ENCODE measurements at regions of chr1 and their contacts with region 1.

Region 1: DNA sequence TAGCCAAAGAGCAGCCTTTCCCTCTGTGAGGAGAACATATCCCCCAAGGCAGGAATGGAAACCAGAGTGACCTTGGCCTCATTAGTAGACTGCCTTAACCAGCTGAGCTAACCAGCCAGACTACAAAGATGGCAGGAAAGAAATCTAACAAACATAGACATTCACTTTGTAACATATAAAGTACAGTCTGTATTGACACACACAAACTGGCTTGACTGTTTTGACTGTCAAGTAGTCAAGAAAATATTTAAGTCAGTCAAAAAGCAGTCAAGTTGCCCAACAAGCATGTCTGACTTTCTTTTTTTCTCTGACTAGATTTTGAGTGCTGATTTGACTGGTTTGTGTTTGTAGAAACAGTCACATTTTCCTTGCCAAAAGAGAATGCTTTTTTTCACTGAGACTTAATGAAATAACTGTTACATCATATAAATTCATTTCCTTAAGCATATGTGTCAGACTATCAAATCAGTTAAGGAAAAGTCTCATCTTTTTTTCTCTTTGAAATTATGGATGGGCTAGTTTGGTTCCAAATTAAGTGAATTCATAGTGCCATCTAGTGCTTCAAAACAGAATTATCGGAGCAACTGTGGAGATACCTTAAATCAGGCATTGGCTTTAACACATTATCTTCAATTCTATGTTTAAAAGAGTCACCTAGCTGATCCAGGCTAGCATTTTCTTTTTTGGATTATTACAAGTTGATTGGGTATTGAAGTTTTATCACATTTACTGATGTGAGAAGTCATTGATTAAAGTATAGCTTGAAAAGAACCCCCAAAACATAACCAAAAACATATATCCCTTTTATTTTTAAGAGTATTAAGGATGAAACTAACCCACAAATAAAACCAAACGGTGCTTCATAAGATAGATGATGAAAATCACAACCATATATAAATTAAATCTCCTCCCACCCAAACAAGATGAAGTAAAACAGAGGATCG is 75.0 kb downstream of the ATP6V1G3 start:
- DNase-seq: peak; percentile 83
- H3K4me3 ChIP-seq: no peak overlapping the region
- H3K27ac ChIP-seq: peak overlapping the region; percentile 53
- H3K4me1 ChIP-seq: peaks cover 9% of the 10 kb centered on the region
- H3K27me3 ChIP-seq: no peaks in the 10 kb centered on the region
- CTCF ChIP-seq: peak; percentile 22 to 48
- POLR2A ChIP-seq: no peak

Region 2: DNA sequence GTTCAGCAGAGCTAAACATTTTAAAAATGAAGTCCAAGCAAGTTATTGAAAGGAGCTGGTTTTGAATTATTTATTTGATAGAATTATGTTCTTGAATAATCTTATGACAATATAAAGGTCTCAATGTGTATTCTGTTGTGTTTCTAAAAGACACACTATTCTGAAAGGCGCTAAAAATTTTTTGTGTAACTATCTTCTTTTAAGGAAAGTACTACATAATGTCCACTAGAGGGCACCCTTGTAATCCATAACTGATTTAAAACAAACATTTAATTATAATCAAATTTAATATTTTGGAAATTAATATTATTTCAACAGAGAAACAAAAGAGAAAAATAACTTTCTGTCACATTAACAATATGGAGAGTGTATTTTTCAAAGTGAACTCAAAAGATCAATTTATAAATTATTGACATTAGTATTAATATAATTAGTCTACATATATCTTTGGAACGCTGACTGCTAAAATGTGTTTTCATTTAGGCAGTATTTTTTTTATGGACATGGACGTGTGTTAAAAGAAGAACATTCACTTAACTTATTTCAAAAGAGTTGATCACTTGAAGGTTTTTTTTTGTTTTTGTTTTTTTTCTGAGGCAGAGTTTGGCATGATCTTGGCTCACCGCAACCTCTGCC is 938.6 kb before region 1 on chr1:
- CTCF ChIA-PET with region 1: interaction called, 9 read pairs
- POLR2A ChIA-PET with region 1: no interaction called
- dilution Hi-C with region 1: no loop called
- intact Hi-C with region 1: loop called (anchors 1 kb)
- DNase-seq: peak; percentile 31
- H3K4me3 ChIP-seq: no peak overlapping the region
- H3K27ac ChIP-seq: no peak overlapping the region
- H3K4me1 ChIP-seq: no peaks in the 10 kb centered on the region
- H3K27me3 ChIP-seq: no peaks in the 10 kb centered on the region
- CTCF ChIP-seq: peak; percentile 16 to 18
- POLR2A ChIP-seq: no peak

Region 3: GRCh38 chr1:197868751-197869489 is 596.6 kb before region 1 on chr1:
- CTCF ChIA-PET with region 1: interaction called, 11 read pairs
- POLR2A ChIA-PET with region 1: no interaction called
- dilution Hi-C with region 1: no loop called
- intact Hi-C with region 1: loop called (anchors 5 kb)
- DNase-seq: peak; percentile 56
- H3K4me3 ChIP-seq: no peak overlapping the region
- H3K27ac ChIP-seq: no peak overlapping the region
- H3K4me1 ChIP-seq: no peaks in the 10 kb centered on the region
- H3K27me3 ChIP-seq: no peaks in the 10 kb centered on the region
- CTCF ChIP-seq: peak; percentile 54 to 59
- POLR2A ChIP-seq: no peak

Region 4: DNA sequence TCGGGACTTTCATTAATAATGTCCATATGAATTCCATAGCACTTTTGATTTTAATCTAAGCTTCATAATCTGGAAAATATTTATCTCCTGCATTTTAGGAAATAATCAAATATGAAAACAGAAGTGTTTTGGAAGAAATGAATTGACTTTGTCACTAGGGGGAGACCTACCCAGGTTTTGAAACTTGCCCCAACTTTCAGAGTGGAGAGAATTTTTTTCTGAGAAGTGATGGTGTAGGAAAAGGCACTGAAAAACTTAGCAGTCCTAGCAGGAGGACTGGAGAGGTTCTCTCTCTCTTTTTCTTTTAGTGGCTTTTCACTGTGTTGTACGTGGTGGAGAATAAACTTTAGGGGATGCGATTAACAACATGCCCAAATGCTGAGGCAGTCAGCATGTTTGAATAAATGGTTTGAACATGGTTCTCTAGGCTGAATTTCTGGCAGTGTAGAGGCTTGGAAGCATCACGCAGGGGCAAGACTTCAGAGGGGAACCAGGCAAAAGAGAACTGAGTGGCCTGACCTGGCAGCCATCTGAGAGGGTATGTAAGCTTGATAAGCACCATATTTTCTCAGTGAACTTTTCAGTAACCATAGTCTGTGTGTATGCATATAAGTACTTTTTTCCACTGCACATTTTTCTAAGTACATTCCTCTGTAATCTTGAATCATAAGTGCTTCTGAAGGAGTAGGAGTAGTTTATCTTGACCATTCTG is 377.0 kb before region 1 on chr1:
- CTCF ChIA-PET with region 1: interaction called, 14 read pairs
- POLR2A ChIA-PET with region 1: no interaction called
- dilution Hi-C with region 1: no loop called
- intact Hi-C with region 1: loop called (anchors 1 kb)
- DNase-seq: peak; percentile 69
- H3K4me3 ChIP-seq: no peak overlapping the region
- H3K27ac ChIP-seq: peak overlapping the region; percentile 21
- H3K4me1 ChIP-seq: peaks cover 4% of the 10 kb centered on the region
- H3K27me3 ChIP-seq: no peaks in the 10 kb centered on the region
- CTCF ChIP-seq: peak; percentile 31 to 48
- POLR2A ChIP-seq: no peak

Region 5: GRCh38 chr1:198265073-198265661 is 200.3 kb before region 1 on chr1:
- CTCF ChIA-PET with region 1: no interaction called
- POLR2A ChIA-PET with region 1: no interaction called
- dilution Hi-C with region 1: no loop called
- intact Hi-C with region 1: loop called (anchors 2 kb)
- DNase-seq: peak; percentile 61
- H3K4me3 ChIP-seq: no peak overlapping the region
- H3K27ac ChIP-seq: no peak overlapping the region
- H3K4me1 ChIP-seq: peaks cover 42% of the 10 kb centered on the region
- H3K27me3 ChIP-seq: no peaks in the 10 kb centered on the region
- CTCF ChIP-seq: no peak
- POLR2A ChIP-seq: no peak

Region 6: GRCh38 chr1:198483006-198483405 is 17.5 kb after region 1 on chr1:
- CTCF ChIA-PET with region 1: no interaction called
- POLR2A ChIA-PET with region 1: no interaction called
- dilution Hi-C with region 1: no loop called
- intact Hi-C with region 1: no loop called
- DNase-seq: no peak
- H3K4me3 ChIP-seq: no peak overlapping the region
- H3K27ac ChIP-seq: no peak overlapping the region
- H3K4me1 ChIP-seq: no peaks in the 10 kb centered on the region
- H3K27me3 ChIP-seq: no peaks in the 10 kb centered on the region
- CTCF ChIP-seq: no peak
- POLR2A ChIP-seq: no peak

Region 7: DNA sequence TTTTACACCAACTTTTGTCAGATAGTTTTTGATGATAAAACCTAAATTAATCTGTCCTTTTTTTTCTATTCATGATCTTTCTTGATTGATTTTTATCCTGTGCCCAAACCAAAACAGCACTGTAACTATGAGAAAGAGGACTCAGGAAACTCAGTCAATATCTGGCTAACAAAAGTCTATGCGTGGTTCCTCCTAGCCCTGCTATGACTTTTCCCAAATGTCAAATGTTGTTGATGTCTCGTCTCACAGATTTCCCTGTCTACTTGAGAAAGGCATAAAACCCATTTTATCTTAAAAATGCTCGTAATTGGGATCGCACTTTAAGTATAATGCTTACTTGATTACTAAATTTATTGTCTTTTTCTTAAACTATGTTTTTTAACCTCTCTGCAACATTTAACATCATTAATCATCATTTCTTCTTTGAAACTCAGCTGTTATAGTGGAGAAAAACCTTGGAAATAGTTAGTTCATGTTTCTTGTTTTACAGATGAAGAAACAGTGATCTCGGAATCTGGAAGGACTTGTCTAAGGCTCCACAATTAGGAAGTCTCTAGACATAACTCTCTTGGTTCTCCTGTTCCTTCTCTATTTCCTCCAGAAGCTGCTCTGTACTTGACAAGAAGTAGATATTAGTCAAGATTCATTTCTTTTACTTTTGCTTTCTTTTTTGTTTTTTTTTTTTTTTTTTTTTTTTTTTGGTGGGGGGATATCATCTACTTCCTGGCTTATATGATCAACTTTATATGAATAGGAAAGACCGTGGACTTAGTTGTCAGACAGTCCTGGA is 147.2 kb after region 1 on chr1:
- CTCF ChIA-PET with region 1: no interaction called
- POLR2A ChIA-PET with region 1: no interaction called
- dilution Hi-C with region 1: no loop called
- intact Hi-C with region 1: no loop called
- DNase-seq: no peak
- H3K4me3 ChIP-seq: no peak overlapping the region
- H3K27ac ChIP-seq: no peak overlapping the region
- H3K4me1 ChIP-seq: no peaks in the 10 kb centered on the region
- H3K27me3 ChIP-seq: no peaks in the 10 kb centered on the region
- CTCF ChIP-seq: no peak
- POLR2A ChIP-seq: no peak

Region 8: DNA sequence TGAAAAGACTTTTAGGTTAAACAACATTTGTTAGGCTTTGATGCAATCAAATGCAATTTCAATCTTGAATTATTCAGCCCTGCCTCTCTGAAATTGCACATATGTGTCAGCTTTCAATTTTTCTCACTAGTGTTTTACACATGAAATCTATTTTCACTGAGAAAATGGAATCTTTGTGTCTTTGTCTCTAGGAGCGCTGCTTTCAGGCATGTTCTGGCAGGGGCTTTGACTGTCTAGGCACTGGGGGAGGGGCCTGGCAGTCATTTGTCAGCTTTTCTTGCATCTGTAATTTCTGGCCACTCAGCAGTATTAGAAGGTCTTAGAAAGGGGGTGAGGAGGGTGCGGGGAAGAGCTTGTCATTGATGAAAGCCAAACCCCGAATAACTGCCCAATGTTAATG is 437.7 kb after region 1 on chr1:
- CTCF ChIA-PET with region 1: no interaction called
- POLR2A ChIA-PET with region 1: no interaction called
- dilution Hi-C with region 1: no loop called
- intact Hi-C with region 1: no loop called
- DNase-seq: no peak
- H3K4me3 ChIP-seq: no peak overlapping the region
- H3K27ac ChIP-seq: no peak overlapping the region
- H3K4me1 ChIP-seq: peaks cover 17% of the 10 kb centered on the region
- H3K27me3 ChIP-seq: no peaks in the 10 kb centered on the region
- CTCF ChIP-seq: no peak
- POLR2A ChIP-seq: no peak